ENCODE measurements at regions of chr19 and their contacts with region 1.

Region 1: GRCh38 chr19:32674959-32675719 is at the start of gene ANKRD27:
- DNase-seq: peak; percentile 94 to 99 (median 98)
- H3K4me3 ChIP-seq: peak within 1 kb of the TSS; percentile 73 to 99 (median 92)
- H3K27ac ChIP-seq: peak within 1 kb of the TSS in 49 of 59 donors; percentile 7 to 90 (median 77)
- H3K27me3 ChIP-seq: peaks cover 0 to 15% (median 4%) of the 10 kb centered on the region in 45 donors
- CTCF ChIP-seq: peak in 6 of 56 donors; percentile 12 to 33 (median 14)
- total RNA-seq, gene ANKRD27: 27.8 to 59.7 (median 42.6) TPM

Region 2: DNA sequence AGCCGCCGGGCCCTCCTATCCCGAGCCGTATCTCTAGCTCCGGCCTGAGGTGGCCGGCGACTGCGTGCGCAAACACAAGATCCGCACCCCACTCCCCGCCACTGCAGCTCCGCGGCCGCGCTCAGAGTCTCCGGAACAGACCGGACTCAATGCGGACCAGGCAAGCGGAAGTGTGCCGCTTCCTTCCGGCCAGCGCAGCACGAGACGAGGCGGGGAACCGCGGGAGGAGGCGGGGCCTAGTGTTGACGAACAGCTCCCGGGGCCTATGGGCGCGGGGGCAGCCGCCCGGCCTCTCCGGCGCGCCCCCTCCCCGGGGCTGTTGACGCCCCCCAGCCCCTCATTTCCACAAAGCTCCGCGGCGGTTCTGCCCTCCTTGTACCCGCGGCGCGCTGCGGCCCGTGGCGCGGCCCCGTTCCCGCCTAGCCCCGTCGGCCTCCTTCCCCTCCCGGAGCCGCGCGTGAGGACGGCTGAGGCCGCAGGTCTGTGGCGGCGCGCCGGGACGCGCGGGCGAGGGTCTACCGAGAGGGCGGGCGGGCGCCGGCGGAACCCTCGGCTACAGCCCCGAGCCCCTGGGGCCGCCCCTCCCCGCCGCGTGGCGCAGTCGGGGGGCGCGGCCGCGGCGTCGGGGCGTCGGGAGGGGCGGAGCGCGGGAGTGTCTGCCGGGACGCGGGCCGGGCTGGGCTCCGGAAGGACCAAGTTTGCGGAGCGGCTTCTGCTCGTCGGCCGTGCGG is 269.5 kb before region 1 on chr19 and contains the start of gene DPY19L3:
- intact Hi-C with region 1: loop called in 1 of 2 experiments (anchors 10 kb)
- DNase-seq: peak; percentile 94 to 98 (median 97)
- H3K4me3 ChIP-seq: peak within 1 kb of the TSS; percentile 67 to 95 (median 87)
- H3K27ac ChIP-seq: peak within 1 kb of the TSS; percentile 74 to 99 (median 96)
- H3K27me3 ChIP-seq: no peaks in the 10 kb centered on the region
- CTCF ChIP-seq: peak in 11 of 56 donors; percentile 4 to 40 (median 24)
- total RNA-seq, gene DPY19L3: 22.7 to 83.2 (median 48.3) TPM

Region 3: DNA sequence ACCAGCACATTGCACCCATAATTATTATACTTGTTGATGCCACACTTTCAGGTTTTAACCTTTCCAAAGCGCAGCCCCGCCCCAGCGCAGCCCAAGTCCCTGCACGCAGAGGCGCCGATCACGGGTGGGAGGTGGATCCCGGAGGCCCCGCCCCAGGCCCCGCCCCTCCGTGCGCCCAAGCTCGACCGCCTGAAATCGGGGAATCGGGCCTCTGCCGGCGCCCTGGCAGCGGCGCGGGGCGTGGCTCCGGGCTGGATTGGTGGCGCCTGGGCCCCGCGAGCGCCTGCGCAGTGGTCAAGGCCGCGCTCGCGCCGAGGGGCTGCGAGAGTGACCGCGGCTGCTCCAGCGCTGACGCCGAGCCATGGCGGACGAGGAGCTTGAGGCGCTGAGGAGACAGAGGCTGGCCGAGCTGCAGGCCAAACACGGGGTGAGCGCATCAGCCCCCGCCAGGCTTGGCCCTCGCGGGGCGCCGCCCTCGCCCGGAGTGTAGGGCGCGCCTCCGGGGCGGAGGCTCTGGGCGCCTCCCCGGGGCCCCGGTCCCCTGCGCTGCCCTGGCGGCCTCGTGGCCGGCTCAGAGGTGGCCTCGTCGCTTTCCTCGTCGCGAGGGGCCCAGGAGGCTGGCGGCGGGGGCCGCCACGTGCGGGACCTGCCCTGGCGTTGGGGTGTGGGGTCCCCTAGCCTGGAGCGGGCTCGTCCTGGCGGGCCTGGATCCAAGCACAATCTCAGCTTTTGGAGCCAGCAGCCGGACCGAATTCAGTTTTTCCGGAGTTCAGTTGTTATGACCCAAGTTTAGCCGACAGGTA is 94.0 kb before region 1 on chr19 and contains the start of gene PDCD5:
- intact Hi-C with region 1: loop called in 1 of 2 experiments (anchors 5 kb)
- DNase-seq: peak; percentile 91 to 98 (median 96)
- H3K4me3 ChIP-seq: peak within 1 kb of the TSS; percentile 63 to 100 (median 91)
- H3K27ac ChIP-seq: peak within 1 kb of the TSS in 54 of 59 donors; percentile 9 to 89 (median 79)
- H3K27me3 ChIP-seq: no peaks in the 10 kb centered on the region
- CTCF ChIP-seq: peak in 30 of 56 donors; percentile 5 to 61 (median 28)
- total RNA-seq, gene PDCD5: 34.0 to 109 (median 63.1) TPM

Region 4: GRCh38 chr19:32691291-32691951 is 16.3 kb after region 1 on chr19 and contains the start of gene NUDT19:
- intact Hi-C with region 1: loop called (anchors 2 kb)
- DNase-seq: peak; percentile 69 to 89 (median 84)
- H3K4me3 ChIP-seq: peak within 1 kb of the TSS; percentile 58 to 94 (median 80)
- H3K27ac ChIP-seq: peak within 1 kb of the TSS in 56 of 59 donors; percentile 26 to 92 (median 78)
- H3K27me3 ChIP-seq: no peaks in the 10 kb centered on the region
- CTCF ChIP-seq: peak in 16 of 56 donors; percentile 6 to 40 (median 22)
- total RNA-seq, gene NUDT19: 4.0 to 9.7 (median 6.3) TPM